Astrocyte of the cerebellum (primary cell): ENCODE measurements at regions of chr21 and their contacts with region 1.

Region 1: GRCh38 chr21:40120940-40121575 is 253.8 kb downstream of the PCP4 start:
- DNase-seq: peak; percentile 34
- H3K4me3 ChIP-seq: no peak overlapping the region
- CTCF ChIP-seq: peak; percentile 96

Region 2: DNA sequence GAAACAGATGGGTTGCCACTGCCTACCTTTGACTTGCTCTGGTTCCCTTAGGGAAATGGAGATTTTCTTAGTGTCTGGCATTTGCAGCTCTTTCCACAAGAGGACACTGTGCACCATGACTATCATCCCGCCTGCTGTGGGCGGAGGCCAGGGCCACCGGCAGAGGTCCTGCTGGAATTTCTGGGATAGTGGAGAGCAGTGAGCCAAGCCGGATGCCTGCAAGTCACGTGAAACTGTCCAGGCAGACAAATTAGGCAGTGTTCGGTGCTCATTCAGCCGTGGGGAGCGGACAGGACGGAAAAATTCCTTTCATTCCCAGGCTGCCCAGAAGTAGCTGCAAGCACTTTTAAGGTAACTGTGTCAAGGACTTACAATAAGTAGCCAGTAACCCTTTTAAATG is 332.7 kb before region 1 on chr21:
- in situ Hi-C with region 1: loop called (anchors 25 kb)
- DNase-seq: peak; percentile 96
- H3K4me3 ChIP-seq: no peak overlapping the region
- CTCF ChIP-seq: peak; percentile 99